ENCODE measurements at regions of chr9 and their contacts with region 1.

Region 1: DNA sequence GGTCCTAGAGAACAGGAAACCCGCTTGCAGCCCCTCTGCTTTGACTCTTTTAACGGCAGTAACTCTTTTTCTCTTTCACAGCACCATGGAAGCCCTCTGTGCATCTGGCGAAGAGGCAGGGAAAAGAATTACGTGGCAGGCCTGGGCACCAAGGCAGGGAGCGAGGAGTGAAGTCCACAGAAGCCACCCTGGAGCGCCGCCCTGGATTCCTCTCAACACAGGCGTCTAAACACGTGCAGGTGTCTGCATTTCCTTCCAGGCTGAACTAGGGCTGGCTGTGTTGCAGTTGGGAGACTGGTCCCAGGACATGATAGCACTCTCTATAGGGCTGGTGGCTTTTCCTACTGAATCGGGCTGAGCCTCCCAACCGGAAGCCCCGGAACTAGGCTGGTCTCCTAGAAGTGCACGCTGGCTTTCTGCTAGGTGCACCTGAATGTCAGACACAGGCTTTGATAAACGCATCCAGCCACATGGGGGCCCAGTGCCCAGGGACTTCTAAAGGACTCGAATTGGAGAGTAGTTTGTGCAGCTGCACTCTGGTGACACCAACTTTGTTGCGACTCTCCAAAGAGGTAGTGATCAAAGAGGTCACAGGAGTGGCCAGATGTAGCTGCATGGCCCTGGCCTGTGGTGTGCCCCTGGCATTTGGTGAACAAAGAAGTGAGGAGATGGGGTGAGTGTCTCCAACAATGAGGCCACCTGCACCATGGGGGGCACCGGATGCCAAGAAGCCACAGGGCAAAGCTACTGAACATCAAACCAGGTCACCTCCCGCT is 54.5 kb downstream of the AK8 start:
- DNase-seq: no peak
- ATAC-seq: peak; percentile 55

Region 2: DNA sequence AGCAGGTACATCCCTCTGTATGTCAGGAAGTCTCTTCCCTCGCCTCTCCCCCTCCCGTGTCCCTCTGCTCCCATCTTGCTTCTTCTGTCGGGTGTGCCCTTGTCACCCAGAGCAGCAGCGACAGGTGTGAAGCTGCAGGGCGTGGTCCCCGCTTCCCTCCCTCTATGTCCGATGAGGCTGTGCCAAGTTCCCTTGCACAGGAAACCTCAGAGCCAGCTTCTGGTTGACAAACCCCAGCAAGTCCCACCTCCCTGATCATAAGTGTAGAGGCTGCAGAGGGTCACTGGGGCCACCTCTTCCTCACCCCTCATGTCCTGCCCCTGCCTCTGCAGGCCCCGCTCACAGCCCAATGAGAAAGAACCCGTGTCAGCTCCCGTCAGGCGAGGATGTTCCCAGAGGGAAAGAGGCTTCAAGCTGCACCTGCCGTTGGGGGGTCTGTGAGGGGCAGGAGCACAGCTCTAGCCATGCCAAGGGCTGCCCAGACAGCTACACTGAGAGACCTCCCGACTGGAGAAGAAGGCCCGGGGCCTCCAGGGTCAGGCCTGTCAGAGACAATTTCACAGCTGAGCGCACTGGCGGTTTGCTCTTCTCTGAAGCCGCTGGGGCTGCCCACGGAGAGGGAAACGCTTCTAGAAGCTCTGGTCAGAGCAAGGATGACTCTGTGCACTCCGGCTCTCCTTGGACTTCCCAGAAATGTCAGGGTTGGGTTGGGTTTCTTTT is 18.8 kb before region 1 on chr9:
- intact Hi-C with region 1: no loop called
- DNase-seq: no peak
- ATAC-seq: no peak

Region 3: DNA sequence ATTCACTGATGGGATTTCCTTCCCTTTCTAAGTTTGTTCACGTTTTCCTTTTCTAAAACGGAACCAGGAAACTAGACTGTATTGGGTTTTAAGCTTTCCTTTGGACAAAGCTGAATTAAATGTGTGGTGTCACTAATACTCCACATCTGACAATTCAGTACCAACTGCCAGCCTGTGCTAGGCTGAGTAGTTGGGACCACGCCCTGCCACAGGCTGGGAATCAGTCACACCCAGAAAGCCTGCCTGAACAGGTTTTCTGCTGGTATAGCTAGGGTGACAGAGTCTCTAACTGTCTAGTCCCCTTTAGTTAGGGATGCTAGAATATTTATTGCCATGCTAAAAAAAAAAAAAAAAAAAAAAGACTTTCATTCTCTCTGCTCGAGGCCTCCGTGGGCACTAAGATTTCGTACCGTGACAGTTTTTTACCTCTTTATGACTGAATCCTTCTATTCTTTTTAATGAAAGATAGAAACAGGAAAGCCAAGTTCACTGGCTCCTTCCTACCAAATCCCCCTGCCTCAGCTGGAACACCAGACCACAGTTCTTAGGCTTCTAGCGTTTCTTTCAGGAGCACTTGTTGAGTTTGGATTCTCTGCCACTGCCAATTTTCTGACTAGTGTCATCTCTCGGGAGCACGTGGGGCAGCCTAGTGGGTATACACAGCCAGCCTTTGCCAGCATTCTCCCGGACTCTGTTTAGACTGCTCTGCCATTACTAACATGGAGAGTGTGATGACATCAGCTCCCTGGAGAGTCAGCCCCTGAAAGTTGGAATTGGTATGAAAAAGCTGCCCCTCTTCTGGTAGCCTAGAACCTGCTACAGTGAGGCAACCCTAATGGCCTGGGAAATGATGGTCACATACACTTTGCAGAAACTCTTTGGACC is 71.0 kb after region 1 on chr9:
- intact Hi-C with region 1: loop called (anchors 10 kb)
- DNase-seq: no peak
- ATAC-seq: no peak